GM12878 (cell line): ENCODE measurements at regions of chr7 and their contacts with region 1.

Region 1: GRCh38 chr7:134021836-134022235 is 105.3 kb upstream of the LRGUK start:
- DNase-seq: no peak
- ATAC-seq: peak; percentile 71
- H3K4me3 ChIP-seq: no peak overlapping the region
- H3K27ac ChIP-seq: no peak overlapping the region
- H3K4me1 ChIP-seq: no peaks in the 10 kb centered on the region
- H3K27me3 ChIP-seq: no peaks in the 10 kb centered on the region
- CTCF ChIP-seq: no peak
- EP300 ChIP-seq: no peak
- POLR2A ChIP-seq: no peak
- RAD21 ChIP-seq: peak; percentile 16; the same call in 1 of the 2 replicates

Region 2: DNA sequence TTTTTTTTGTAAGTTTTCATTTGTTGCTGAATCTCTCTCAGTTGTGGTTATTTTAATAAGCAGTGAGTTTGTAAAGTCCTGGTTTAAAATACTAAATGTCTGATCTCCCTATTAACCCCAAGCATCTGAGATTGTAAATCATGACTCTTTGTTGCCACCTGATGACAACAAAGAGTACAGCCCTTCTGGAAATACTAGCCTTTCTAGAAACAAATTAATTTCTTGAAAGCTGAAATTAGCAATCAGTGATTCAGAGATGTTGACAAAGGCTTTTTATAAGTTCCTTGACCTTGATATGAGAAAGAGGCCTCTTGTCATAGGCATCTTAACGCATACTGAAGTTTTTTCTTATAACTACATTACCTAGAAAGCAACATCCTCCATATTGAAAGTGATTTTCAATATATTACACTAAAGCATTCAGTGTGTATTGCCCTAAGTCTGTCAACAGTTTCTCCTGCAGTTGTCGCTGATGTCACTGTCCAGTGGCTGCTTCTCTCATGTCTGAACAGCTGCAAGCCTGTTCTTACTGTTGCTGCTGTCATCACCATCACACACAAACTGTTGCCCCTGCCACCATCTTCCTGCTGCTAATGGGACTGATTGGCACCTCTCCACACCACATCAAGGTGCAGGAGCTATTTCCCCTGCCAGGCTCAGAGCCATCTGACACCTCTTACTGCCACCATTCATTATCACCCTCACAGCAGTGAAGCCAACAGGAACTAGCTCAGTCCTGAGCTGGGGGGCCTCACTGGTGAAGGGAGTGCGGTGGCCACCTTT is 10.2 kb after region 1 on chr7:
- CTCF ChIA-PET with region 1: interaction called, 10 read pairs
- POLR2A ChIA-PET with region 1: no interaction called
- RAD21 ChIA-PET with region 1: no interaction called
- SMC1A ChIA-PET with region 1: interaction called, 5 read pairs
- in situ Hi-C with region 1: no loop called
- intact Hi-C with region 1: no loop called
- DNase-seq: no peak
- ATAC-seq: peak; percentile 28; the same call in 2 of the 3 replicates
- H3K4me3 ChIP-seq: no peak overlapping the region
- H3K27ac ChIP-seq: no peak overlapping the region
- H3K4me1 ChIP-seq: no peaks in the 10 kb centered on the region
- H3K27me3 ChIP-seq: no peaks in the 10 kb centered on the region
- CTCF ChIP-seq: peak in 1 of 3 experiments; percentile 11; a peak in 1 of 6 replicates
- EP300 ChIP-seq: no peak
- POLR2A ChIP-seq: no peak
- RAD21 ChIP-seq: no peak

Region 3: DNA sequence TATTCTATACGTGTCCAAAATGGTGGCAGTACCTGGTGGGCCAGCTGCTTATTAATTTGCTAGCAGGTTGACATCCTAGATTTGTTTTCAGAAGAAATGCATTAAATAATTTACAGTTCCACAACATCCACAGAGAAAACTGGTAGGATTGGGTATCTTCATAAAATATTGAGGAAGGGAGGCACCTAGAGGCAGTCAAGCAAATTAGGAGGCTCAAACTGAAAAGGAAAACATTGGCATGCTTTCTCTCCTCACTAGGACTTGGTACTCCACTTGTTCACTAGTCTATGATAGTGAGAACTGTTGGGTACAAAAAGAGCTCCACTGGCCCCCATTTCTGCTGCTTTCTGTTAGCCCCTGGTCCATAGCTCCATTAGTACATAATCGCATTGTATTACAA is 87.0 kb after region 1 on chr7:
- CTCF ChIA-PET with region 1: no interaction called
- POLR2A ChIA-PET with region 1: no interaction called
- RAD21 ChIA-PET with region 1: no interaction called
- SMC1A ChIA-PET with region 1: no interaction called
- in situ Hi-C with region 1: no loop called
- intact Hi-C with region 1: no loop called
- DNase-seq: no peak
- ATAC-seq: no peak
- H3K4me3 ChIP-seq: no peak overlapping the region
- H3K27ac ChIP-seq: no peak overlapping the region
- H3K4me1 ChIP-seq: no peaks in the 10 kb centered on the region
- H3K27me3 ChIP-seq: no peaks in the 10 kb centered on the region
- CTCF ChIP-seq: no peak
- EP300 ChIP-seq: no peak
- POLR2A ChIP-seq: no peak
- RAD21 ChIP-seq: 0 out of 2 replicates have a peak, but pooled peaks have one; percentile 6